ENCODE measurements at regions of chr2 and their contacts with region 1.

Region 1: GRCh38 chr2:219530048-219530963 is 13.3 kb downstream of the CHPF start:
- DNase-seq: peak; percentile 91
- H3K4me3 ChIP-seq: peak overlapping the region; percentile 20
- H3K27ac ChIP-seq: no peak overlapping the region
- H3K4me1 ChIP-seq: peaks cover 3% of the 10 kb centered on the region
- H3K27me3 ChIP-seq: no peaks in the 10 kb centered on the region
- CTCF ChIP-seq: peak; percentile 95

Region 2: GRCh38 chr2:219388127-219388844 is 142.0 kb before region 1 on chr2:
- CTCF ChIA-PET with region 1: interaction called, 19 read pairs
- POLR2A ChIA-PET with region 1: no interaction called
- intact Hi-C with region 1: no loop called
- DNase-seq: peak; percentile 96
- H3K4me3 ChIP-seq: peak overlapping the region; percentile 27
- H3K27ac ChIP-seq: peak overlapping the region; percentile 41
- H3K4me1 ChIP-seq: no peaks in the 10 kb centered on the region
- H3K27me3 ChIP-seq: no peaks in the 10 kb centered on the region
- CTCF ChIP-seq: peak; percentile 59

Region 3: DNA sequence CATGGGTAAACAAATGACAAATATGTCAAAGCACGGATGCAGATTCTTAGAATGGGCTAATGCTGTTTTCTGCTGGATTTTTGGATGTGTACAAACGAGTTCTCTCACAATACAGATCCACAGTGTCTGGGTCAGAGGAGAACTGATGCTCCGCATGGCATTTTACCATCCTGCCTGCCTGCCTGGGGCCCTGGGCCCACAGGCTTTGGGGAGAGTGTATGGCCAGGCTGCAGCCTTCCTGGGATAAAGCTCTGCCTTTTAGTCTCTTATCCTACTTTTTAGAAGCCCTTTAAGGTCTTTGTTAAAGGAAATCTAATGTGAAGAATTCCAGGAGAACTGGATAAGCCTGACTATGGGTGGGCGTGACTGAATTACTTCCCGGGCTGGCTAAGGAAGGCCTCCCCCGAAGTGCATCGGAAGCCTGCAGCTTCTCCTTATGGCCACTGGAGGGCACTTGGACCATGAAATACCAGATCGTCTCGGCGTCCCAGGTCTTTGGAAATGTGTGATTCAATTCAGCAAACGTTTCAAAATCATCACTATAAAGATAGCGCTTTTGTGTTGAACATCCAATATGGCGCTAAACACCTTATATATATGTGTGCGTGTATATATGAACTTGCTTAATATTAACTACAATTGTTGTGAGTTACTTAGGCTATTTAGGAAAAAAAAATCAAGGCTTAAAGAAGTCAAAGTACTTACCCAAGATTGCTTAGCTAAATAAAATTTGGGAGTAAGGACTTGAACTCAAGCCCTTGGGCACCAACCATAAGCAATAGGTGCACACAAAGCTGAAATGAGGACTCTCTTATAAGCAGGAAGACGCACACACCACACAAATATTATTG is 127.4 kb before region 1 on chr2:
- CTCF ChIA-PET with region 1: interaction called, 35 read pairs
- POLR2A ChIA-PET with region 1: no interaction called
- intact Hi-C with region 1: loop called (anchors 1 kb)
- DNase-seq: peak; percentile 88
- H3K4me3 ChIP-seq: no peak overlapping the region
- H3K27ac ChIP-seq: no peak overlapping the region
- H3K4me1 ChIP-seq: peaks cover 6% of the 10 kb centered on the region
- H3K27me3 ChIP-seq: no peaks in the 10 kb centered on the region
- CTCF ChIP-seq: peak; percentile 97

Region 4: DNA sequence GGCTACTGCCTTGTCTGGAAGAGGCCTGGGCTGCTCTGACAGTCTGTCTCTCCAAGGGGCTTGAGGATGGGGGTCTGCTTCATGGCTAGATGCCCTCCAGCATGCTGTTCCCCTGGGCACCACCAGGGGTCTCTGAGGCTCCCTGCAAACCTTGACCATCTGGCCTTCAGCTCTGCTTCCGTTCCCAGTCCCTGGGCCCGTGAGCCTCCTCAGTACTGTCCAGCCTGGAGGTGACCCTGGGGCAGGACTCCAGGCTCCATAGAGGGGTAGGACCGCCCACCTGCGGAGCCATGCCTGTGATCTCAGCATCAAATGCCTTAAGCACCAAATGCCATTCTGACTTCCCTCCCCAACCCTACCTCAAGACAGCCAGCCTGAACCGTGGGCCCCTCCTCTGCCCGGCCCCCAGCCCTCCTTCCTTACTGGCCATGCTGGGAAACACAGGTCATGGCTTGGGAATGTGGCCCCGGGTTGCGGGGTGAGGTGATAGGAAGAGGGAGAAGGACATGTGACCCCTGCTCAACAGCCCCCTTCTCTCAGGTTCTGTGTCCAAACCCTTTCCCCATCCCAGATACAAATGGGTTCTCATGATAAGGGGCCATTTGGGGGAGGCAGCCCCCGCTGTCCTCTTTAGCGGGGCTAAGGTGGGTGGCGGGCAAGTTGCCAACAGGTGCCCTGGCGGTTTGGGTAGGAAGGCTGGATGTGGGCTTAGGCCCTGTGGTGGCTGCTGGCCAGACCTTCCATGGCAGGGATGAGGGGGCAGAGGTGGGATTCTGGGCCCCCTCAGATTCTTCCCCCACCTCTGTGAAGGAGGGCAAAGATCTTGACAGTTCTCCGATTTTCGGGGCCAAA is 70.6 kb before region 1 on chr2:
- CTCF ChIA-PET with region 1: interaction called, 27 read pairs
- POLR2A ChIA-PET with region 1: no interaction called
- intact Hi-C with region 1: loop called (anchors 1 kb)
- DNase-seq: peak; percentile 38
- H3K4me3 ChIP-seq: no peak overlapping the region
- H3K27ac ChIP-seq: no peak overlapping the region
- H3K4me1 ChIP-seq: peaks cover 6% of the 10 kb centered on the region
- H3K27me3 ChIP-seq: no peaks in the 10 kb centered on the region
- CTCF ChIP-seq: peak; percentile 90

Region 5: DNA sequence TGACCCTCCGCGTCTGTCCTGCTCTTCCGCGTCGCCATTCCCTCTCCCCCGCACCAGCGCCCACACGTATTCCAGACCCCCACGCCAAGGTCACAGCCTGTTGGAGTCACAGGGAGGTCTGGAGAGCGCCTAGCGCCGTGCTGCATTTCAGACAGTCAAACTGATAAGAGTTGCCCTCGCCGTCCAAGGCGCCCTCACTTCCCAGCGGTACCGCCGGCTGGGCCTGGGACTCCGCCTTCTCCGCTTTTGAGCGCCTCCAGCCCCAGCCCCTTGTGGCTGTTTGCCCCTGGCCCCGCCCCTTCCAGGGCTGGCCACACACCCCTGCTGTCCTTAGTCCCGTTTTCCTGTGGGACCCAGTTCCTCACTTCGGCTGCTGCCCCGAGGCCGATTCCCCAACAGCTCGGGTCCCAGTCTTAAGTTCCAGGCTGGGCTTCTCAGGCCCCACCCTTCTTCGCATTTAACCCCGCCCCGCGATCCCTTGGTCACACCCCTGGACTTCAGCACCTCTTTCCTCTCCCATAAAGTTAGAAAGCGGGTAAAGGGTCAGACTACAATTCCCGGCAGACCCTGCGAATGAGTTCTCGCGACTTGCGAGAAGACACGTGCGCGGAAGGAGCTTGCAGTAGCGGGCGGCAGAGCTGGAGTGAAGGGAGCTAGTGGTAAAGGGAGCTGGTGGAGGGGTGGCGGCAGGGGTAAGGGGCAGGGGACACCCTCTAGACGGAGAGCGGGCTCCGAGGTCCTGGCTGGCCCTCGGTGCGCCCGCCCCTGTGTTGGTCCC is 31.8 kb before region 1 on chr2 and contains the start of gene GMPPA:
- CTCF ChIA-PET with region 1: interaction called, 101 read pairs
- POLR2A ChIA-PET with region 1: no interaction called
- intact Hi-C with region 1: loop called (anchors 1 kb)
- DNase-seq: peak; percentile 99
- H3K4me3 ChIP-seq: peak within 1 kb of the TSS; percentile 57
- H3K27ac ChIP-seq: peak within 1 kb of the TSS; percentile 79
- H3K4me1 ChIP-seq: peaks cover 26% of the 10 kb centered on the region
- H3K27me3 ChIP-seq: no peaks in the 10 kb centered on the region
- CTCF ChIP-seq: no peak
- total RNA-seq, gene GMPPA: 32.1 and 45.8 TPM in 2 replicates

Measured in A673 (cell line).